Heart right ventricle (tissue), 16 donors: ENCODE measurements at regions of chr3 and their contacts with region 1.

Region 1: GRCh38 chr3:51718547-51719409 is 11.9 kb downstream of the GRM2 start:
- DNase-seq: peak; percentile 44 to 54
- ATAC-seq: peak in 6 of 8 donors; percentile 68 to 82 (median 76)
- H3K4me3 ChIP-seq: no peak overlapping the region
- H3K27ac ChIP-seq: no peak overlapping the region
- H3K4me1 ChIP-seq: peaks cover 0 to 5% (median 0%) of the 10 kb centered on the region in 9 donors
- H3K27me3 ChIP-seq: no peaks in the 10 kb centered on the region
- CTCF ChIP-seq: peak; percentile 40 to 90 (median 72)

Region 2: DNA sequence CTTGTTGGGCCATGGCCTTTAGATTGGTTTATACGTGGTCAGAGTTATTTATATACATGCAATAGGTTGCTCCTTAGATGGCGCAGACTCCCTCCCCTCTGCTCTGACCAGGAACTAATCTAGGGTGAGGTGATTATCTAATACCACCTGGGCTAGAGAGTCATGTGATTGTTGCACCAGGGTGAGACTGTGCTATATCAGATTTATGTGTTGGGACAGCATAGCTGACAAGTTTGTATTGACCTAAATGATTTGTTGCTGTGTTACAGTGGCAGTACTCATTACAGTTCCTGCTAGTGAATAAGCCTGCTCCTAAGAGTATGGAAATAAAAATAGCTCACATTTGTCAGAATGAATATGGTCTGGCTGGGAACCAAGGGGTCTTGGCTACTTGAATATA is 67.5 kb after region 1 on chr3:
- intact Hi-C with region 1: loop called in 2 of 10 experiments (anchors 10 kb)
- DNase-seq: no peak
- ATAC-seq: no peak
- H3K4me3 ChIP-seq: no peak overlapping the region
- H3K27ac ChIP-seq: no peak overlapping the region
- H3K4me1 ChIP-seq: no peaks in the 10 kb centered on the region
- H3K27me3 ChIP-seq: peaks cover 0 to 6% (median 0%) of the 10 kb centered on the region in 7 donors
- CTCF ChIP-seq: no peak

Region 3: GRCh38 chr3:51799879-51800749 is 81.3 kb after region 1 on chr3:
- intact Hi-C with region 1: loop called in 6 of 10 experiments (anchors 5 to 10 kb)
- DNase-seq: peak in 1 of 2 donors; percentile 33
- ATAC-seq: peak in 5 of 8 donors; percentile 57 to 71 (median 69)
- H3K4me3 ChIP-seq: no peak overlapping the region
- H3K27ac ChIP-seq: no peak overlapping the region
- H3K4me1 ChIP-seq: peaks cover 0 to 5% (median 0%) of the 10 kb centered on the region in 9 donors
- H3K27me3 ChIP-seq: peaks cover 0 to 49% (median 31%) of the 10 kb centered on the region in 7 donors
- CTCF ChIP-seq: peak; percentile 63 to 87 (median 81)